Activated CD4-positive, alpha-beta memory T cell treated with anti-CD3 and anti-CD28 coated beads for 36 hours (primary cell): ENCODE measurements at regions of chr16 and their contacts with region 1.

Region 1: GRCh38 chr16:65323655-65324237 is 201.9 kb upstream of the CDH11 start:
- DNase-seq: no peak
- H3K4me3 Mint-ChIP-seq: no peak overlapping the region
- H3K27ac Mint-ChIP-seq: no peak overlapping the region
- H3K4me1 Mint-ChIP-seq: no peaks in the 10 kb centered on the region
- H3K27me3 Mint-ChIP-seq: no peaks in the 10 kb centered on the region

Region 2: DNA sequence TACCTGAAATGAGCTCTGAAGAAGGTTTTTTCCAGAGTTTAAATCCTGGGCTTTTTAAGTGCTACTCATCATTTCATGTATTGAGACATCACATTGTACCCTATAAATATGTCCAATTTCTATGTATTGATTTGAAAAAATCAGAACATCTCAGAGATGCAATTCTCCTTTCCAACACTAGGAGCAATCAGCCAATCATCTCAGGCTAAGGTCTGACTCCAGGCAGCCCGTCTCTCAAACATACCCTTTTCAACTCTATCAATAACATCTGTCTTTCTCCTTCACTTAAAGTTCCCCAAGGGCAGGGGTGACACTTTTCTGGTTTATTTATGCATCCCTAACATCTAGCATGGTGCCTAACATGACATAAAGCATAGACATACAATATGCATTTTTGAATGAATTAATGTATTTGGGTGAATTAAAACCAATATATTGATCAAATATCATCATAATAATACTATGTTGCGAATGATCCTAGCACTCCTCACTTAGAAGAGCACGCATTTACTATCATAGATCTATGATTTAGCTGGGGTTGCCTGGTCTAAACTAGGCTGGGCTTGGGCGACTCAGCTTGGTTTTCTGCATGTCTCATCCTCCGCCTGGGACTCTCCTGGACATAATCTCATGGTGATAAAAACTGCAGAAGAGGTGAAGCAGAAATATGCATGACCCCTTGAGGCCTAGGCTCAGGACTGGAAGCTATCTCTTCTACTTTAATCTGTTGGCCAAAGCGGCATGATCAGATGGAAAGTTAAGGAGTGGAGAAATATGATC is 196.7 kb before region 1 on chr16:
- CTCF ChIA-PET with region 1: no interaction called
- POLR2A ChIA-PET with region 1: no interaction called
- intact Hi-C with region 1: loop called (anchors 2 kb)
- DNase-seq: peak; percentile 21
- H3K4me3 Mint-ChIP-seq: no peak overlapping the region
- H3K27ac Mint-ChIP-seq: no peak overlapping the region
- H3K4me1 Mint-ChIP-seq: no peaks in the 10 kb centered on the region
- H3K27me3 Mint-ChIP-seq: peaks cover 24% of the 10 kb centered on the region

Region 3: GRCh38 chr16:65336160-65336559 is 12.4 kb after region 1 on chr16:
- CTCF ChIA-PET with region 1: no interaction called
- POLR2A ChIA-PET with region 1: no interaction called
- intact Hi-C with region 1: no loop called
- DNase-seq: no peak
- H3K4me3 Mint-ChIP-seq: no peak overlapping the region
- H3K27ac Mint-ChIP-seq: no peak overlapping the region
- H3K4me1 Mint-ChIP-seq: no peaks in the 10 kb centered on the region
- H3K27me3 Mint-ChIP-seq: no peaks in the 10 kb centered on the region

Region 4: GRCh38 chr16:65441501-65441900 is 117.8 kb after region 1 on chr16:
- CTCF ChIA-PET with region 1: no interaction called
- POLR2A ChIA-PET with region 1: no interaction called
- intact Hi-C with region 1: no loop called
- DNase-seq: no peak
- H3K4me3 Mint-ChIP-seq: no peak overlapping the region
- H3K27ac Mint-ChIP-seq: no peak overlapping the region
- H3K4me1 Mint-ChIP-seq: no peaks in the 10 kb centered on the region
- H3K27me3 Mint-ChIP-seq: no peaks in the 10 kb centered on the region